ENCODE measurements at regions of chr2 and their contacts with region 1.

Region 1: DNA sequence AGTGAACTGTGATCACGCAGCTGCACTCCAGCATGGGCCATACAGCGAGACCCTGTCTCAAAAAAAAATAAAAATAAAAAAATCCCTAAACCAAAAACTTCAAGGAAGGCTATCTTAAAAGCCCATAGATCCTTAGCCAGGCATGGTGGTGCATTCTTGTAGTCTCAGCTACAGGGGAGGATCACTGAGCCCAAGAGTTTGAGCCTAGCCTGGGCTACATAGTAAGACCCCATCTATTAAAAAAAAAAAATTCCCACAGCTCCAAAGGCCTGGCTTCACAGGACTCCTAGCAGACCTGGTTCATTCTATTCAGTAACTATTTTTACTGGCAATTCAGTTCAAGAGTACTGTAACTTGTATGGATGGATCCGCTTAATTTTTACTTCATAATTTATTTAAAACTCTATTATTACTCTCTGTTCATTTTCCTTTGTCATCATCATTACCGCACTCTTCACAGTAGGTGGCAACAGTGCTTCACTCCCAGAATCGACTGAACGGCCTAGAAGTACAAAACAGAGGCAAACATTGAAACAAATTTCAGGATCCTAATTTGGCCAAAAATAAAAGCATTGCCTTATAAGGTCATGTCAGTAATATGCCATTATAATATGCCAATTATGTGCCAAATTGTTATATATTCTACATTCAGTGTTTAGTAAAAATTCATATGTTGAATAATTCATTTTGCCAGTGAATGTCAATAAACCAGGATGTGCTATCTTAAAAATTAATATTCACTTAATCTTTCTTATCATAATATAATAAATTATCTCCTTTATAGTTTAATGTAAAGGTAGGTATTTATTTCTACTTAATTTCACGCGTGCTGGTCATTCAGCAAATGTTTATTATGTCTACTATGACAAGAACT is 14.3 kb upstream of the STAM2 start:
- DNase-seq: peak in 2 of 10 donors; percentile 26 to 69
- H3K4me3 ChIP-seq: no peak overlapping the region
- H3K27ac ChIP-seq: peak overlapping the region in 9 of 59 donors; percentile 3 to 62 (median 23)
- H3K27me3 ChIP-seq: no peaks in the 10 kb centered on the region
- CTCF ChIP-seq: peak; percentile 45 to 94 (median 86)

Region 2: DNA sequence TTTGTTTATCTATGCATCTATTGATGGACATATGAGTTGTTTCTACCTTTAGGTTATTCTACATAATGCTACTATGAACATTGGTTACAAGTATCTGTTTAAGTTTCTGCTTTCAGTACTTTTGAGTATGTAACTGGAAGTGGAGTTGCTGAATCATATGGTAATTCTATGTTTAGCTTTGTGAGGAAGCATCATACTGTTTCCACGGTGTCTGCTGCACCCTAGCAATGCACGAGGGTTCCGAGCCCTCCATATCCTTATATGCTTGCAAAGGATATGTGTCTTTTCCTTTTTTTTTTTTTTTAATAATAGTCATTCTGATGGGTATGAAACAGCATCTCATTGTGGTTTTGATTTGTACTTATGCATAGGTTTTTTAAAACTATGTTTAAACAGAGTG is 228.8 kb after region 1 on chr2:
- intact Hi-C with region 1: loop called (anchors 5 to 10 kb)
- DNase-seq: peak in 5 of 10 donors; percentile 56 to 65 (median 62)
- H3K4me3 ChIP-seq: peak overlapping the region in 11 of 59 donors; percentile 1 to 47 (median 10)
- H3K27ac ChIP-seq: peak overlapping the region; percentile 2 to 100 (median 84)
- H3K27me3 ChIP-seq: no peaks in the 10 kb centered on the region
- CTCF ChIP-seq: peak in 52 of 56 donors; percentile 8 to 69 (median 34)

Region 3: GRCh38 chr2:152635635-152636298 is 445.9 kb after region 1 on chr2:
- intact Hi-C with region 1: loop called in 1 of 2 experiments (anchors 2 kb)
- DNase-seq: peak in 9 of 10 donors; percentile 31 to 76 (median 63)
- H3K4me3 ChIP-seq: no peak overlapping the region
- H3K27ac ChIP-seq: peak overlapping the region in 46 of 59 donors; percentile 1 to 73 (median 55)
- H3K27me3 ChIP-seq: no peaks in the 10 kb centered on the region
- CTCF ChIP-seq: peak; percentile 70 to 95 (median 87)

Measured in dorsolateral prefrontal cortex (tissue), 120 donors.